ENCODE measurements at regions of chr2 and their contacts with region 1.

Region 1: DNA sequence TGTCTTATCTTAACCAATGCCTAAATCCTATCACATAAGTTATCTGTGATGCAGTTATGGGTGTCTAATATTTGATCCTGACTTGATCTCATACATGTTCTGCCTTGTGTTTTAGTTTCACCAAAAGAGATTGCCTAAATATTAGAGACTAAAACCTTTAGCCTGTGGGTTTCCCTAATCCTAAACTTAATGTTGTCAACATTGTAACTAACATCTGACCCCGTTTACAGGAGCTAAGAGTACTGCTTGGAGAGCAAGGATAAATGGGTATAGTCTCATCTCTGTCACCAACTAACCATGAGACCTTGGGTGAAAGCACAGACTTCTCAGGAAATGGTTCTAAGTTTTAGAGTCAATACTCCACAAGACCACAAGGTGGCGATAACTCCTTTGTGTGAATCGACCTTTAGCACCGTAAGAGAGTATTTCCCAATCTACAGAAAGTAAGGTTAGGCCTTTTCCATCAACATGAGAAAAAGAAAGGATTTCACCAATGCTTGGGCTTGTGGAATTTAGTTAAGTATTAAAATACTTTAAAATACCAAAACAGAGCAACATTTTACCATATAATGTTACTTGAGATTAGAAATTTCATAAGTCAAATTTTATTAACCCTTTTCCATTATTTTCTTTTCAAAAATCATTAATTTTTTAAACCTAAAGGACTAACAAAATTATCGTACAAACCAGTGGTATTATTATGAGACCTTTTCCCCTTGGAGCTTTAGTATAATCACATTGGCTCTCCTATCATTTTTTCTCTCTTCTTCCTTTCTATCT is 60.5 kb downstream of the G6PC2 start:
- DNase-seq: peak; percentile 41
- ATAC-seq: peak; percentile 93
- H3K4me3 ChIP-seq: no peak overlapping the region
- H3K27ac ChIP-seq: no peak overlapping the region
- H3K4me1 ChIP-seq: no peaks in the 10 kb centered on the region
- H3K27me3 ChIP-seq: peaks cover 0 to 2% of the 10 kb centered on the region in 2 experiments; a peak in 1 of 4 replicates
- CTCF ChIP-seq: peak; percentile 72 to 78 (median 76)
- EP300 ChIP-seq: no peak
- POLR2A ChIP-seq: no peak
- RAD21 ChIP-seq: peak; percentile 82

Region 2: GRCh38 chr2:169131587-169132512 is 170.2 kb after region 1 on chr2:
- CTCF ChIA-PET with region 1: interaction called, 32 read pairs
- POLR2A ChIA-PET with region 1: no interaction called
- RAD21 ChIA-PET with region 1: interaction called, 3 read pairs
- SMC1A ChIA-PET with region 1: interaction called, 6 read pairs
- in situ Hi-C with region 1: no loop called
- intact Hi-C with region 1: loop called (anchors 1 kb)
- DNase-seq: peak; percentile 15
- ATAC-seq: peak; percentile 88
- H3K4me3 ChIP-seq: no peak overlapping the region
- H3K27ac ChIP-seq: no peak overlapping the region
- H3K4me1 ChIP-seq: no peaks in the 10 kb centered on the region
- H3K27me3 ChIP-seq: peaks cover 0 to 2% of the 10 kb centered on the region in 2 experiments; a peak in 1 of 4 replicates
- CTCF ChIP-seq: peak; percentile 63 to 76 (median 72); a peak in 5 of 6 replicates
- EP300 ChIP-seq: no peak
- POLR2A ChIP-seq: no peak
- RAD21 ChIP-seq: peak; percentile 52

Region 3: DNA sequence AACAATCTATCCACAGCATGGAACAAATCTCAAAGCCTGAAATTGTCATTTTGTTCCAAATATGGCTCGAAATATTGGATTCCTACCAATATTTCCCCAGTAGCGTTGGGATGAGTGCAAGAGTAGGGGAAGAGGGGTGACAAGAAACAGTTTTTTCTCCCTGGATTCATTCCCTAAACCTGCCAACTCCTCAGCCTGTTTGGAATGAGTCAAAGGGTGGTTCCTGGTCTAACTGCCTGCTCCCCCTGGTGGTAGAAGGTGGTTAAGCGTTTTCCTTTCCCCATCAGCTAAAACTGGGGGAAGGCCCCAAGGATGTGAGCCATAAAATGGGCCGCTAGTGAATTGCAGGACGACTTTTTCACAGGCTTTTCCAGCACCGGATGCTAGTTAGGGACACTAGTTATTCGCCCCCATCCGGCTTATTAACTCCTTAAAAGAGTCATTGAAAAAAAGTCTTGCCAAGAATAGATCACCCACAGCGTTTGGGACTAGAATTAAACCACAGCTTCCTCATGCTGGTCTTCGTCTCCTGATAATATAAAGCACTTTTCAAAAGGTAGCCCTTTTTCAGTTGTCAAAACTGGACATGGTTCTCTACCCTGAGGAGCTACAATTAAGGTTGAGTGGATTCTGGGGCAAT is 180.2 kb after region 1 on chr2:
- CTCF ChIA-PET with region 1: interaction called, 13 read pairs
- POLR2A ChIA-PET with region 1: no interaction called
- RAD21 ChIA-PET with region 1: interaction called, 3 read pairs
- SMC1A ChIA-PET with region 1: interaction called, 5 read pairs
- in situ Hi-C with region 1: no loop called
- intact Hi-C with region 1: loop called (anchors 2 kb)
- DNase-seq: peak; percentile 7
- ATAC-seq: peak; percentile 86
- H3K4me3 ChIP-seq: no peak overlapping the region
- H3K27ac ChIP-seq: no peak overlapping the region
- H3K4me1 ChIP-seq: no peaks in the 10 kb centered on the region
- H3K27me3 ChIP-seq: no peaks in the 10 kb centered on the region
- CTCF ChIP-seq: peak; percentile 85 to 94 (median 86)
- EP300 ChIP-seq: no peak
- POLR2A ChIP-seq: no peak
- RAD21 ChIP-seq: peak; percentile 58

Region 4: DNA sequence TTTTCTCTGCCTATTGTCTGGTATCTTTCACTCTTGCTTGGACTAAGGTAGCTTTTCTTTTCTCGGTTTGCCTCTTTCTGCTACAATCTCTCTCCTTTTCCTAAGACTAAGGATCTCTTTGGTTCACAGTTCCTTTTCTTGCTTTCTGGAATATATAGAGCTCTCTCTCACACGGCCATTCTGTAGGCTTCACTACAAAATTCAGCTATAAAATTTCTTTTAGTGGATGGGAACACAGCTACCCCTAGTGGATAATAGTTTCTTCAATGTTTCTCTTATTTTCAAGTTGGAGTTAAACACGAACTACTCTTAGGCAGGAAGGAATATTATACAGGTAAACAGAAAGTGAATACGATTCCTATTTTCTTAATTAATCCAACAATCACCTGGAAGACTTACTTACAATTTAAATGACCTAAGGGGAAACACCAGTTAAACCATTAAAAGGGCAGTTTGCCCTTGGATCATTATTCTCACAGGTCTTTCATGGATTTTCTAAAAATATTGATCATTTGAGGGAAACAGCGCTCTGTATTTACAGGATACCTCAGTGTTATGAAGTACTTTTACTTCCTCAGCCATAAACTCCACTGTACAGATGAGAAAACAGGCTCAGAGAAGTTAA is 260.2 kb after region 1 on chr2:
- CTCF ChIA-PET with region 1: no interaction called
- POLR2A ChIA-PET with region 1: no interaction called
- RAD21 ChIA-PET with region 1: no interaction called
- SMC1A ChIA-PET with region 1: no interaction called
- in situ Hi-C with region 1: no loop called
- intact Hi-C with region 1: loop called (anchors 10 kb)
- DNase-seq: no peak
- ATAC-seq: peak; percentile 51
- H3K4me3 ChIP-seq: no peak overlapping the region
- H3K27ac ChIP-seq: no peak overlapping the region
- H3K4me1 ChIP-seq: no peaks in the 10 kb centered on the region
- H3K27me3 ChIP-seq: no peaks in the 10 kb centered on the region; a peak in 1 of 4 replicates
- CTCF ChIP-seq: peak; percentile 23 to 29 (median 26); a peak in 3 of 6 replicates
- EP300 ChIP-seq: no peak
- POLR2A ChIP-seq: no peak
- RAD21 ChIP-seq: peak; percentile 12; the same call in 1 of the 2 replicates

Measured in GM12878 (cell line).